Body of pancreas (tissue), 4 donors: ENCODE measurements at regions of chr1 and their contacts with region 1.

Region 1: GRCh38 chr1:180863158-180863775 is 49.4 kb upstream of the KIAA1614 start:
- DNase-seq: peak; percentile 24 to 45 (median 37)
- ATAC-seq: peak; percentile 69
- H3K4me3 ChIP-seq: no peak overlapping the region
- H3K27ac ChIP-seq: peak overlapping the region in 2 of 4 donors; percentile 53 to 56
- H3K4me1 ChIP-seq: peaks cover 19% of the 10 kb centered on the region
- H3K27me3 ChIP-seq: no peaks in the 10 kb centered on the region
- CTCF ChIP-seq: peak; percentile 22 to 86 (median 77)
- POLR2A ChIP-seq: no peak

Region 2: DNA sequence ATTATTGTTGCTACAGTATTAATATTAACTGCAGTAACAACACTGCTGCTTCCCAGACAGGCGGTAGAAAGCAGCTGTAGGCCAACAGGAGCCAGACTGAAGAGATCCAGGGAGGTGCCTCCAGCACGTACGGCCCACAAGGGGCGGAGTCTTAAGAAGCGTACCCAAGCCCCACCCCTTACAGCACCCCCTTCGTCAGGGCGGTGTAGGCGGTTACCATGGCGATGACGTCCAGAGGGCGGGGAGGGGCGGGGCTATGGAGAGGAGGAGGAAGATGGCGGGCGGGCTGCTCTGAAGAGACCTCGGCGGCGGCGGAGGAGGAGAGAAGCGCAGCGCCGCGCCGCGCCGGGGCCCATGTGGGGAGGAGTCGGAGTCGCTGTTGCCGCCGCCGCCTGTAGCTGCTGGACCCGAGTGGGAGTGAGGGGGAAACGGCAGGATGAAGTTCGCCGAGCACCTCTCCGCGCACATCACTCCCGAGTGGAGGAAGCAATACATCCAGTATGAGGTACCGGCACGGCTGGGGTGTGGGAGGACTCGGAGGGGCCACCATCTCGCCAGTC is 231.4 kb before region 1 on chr1 and contains the start of gene XPR1:
- intact Hi-C with region 1: loop called (anchors 10 kb)
- DNase-seq: peak; percentile 99
- ATAC-seq: peak; percentile 97
- H3K4me3 ChIP-seq: peak within 1 kb of the TSS; percentile 74 to 100
- H3K27ac ChIP-seq: peak within 1 kb of the TSS; percentile 84 to 92 (median 88)
- H3K4me1 ChIP-seq: peaks cover 45% of the 10 kb centered on the region
- H3K27me3 ChIP-seq: no peaks in the 10 kb centered on the region
- CTCF ChIP-seq: peak in 6 of 7 experiments; percentile 10 to 63 (median 48)
- POLR2A ChIP-seq: peak; percentile 86 to 96 (median 93)
- total RNA-seq, gene XPR1: 11.5 to 13.0 TPM